CD14-positive monocyte (primary cell): ENCODE measurements at regions of chr14 and their contacts with region 1.

Region 1: DNA sequence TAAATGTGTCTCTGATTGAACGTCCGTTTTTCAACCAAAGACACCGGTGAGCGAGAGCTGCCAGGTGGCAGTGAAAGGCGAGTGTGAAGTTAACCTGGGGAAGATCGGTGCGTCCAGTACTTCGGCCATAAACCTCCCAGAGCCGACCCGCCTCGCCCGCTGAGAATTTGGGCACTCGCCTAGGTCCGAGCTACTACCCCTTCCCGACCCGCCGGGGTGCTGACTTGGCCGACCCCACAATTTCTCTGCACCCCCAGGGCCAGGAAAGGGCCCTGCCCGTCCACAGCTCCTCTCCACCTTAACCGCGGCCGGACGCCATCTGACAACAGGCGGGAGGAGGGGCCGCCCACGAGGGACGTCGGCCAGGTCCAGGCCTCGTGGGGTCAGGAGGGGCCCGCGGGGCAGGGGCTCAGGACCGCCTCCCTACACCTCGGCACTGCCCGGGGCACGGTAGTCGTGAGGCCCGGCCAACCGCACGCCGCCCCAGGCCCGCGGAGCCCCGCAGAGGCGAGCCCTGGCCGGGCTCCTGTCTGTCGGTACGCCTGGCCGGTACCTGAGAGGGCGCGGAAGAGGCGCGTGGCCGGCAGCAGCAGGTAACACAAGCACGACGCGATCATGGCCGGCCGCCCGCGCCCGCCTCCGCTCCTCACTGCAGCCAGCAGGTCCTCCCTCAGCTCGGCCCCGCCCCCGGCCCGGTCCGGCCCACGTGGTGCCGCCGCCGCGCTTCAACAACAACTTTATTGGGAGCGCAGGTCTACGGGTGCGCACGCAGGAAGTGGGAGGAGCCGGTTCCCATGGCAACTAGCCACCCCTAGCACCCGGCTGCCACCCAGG is at the start of gene ANGEL1:
- DNase-seq: peak; percentile 96 to 97 (median 96)
- H3K4me3 ChIP-seq: peak within 1 kb of the TSS; percentile 63 to 85 (median 81)
- H3K4me3 Mint-ChIP-seq: peak within 1 kb of the TSS; percentile 90 to 96
- H3K27ac ChIP-seq: peak within 1 kb of the TSS in 1 of 2 donors; percentile 80
- H3K27ac Mint-ChIP-seq: peak within 1 kb of the TSS; percentile 47 to 91 (median 85)
- H3K4me1 ChIP-seq: peaks cover 25 to 28% of the 10 kb centered on the region in 2 donors
- H3K4me1 Mint-ChIP-seq: peaks cover 21% of the 10 kb centered on the region
- H3K27me3 ChIP-seq: no peaks in the 10 kb centered on the region
- H3K27me3 Mint-ChIP-seq: peaks cover 0 to 3% (median 3%) of the 10 kb centered on the region in 3 donors
- CTCF ChIP-seq: no peak
- polyA plus RNA-seq, gene ANGEL1: 8.1 to 10.4 (median 8.5) TPM

Region 2: GRCh38 chr14:76117789-76118484 is 694.5 kb before region 1 on chr14:
- intact Hi-C with region 1: no loop called
- DNase-seq: no peak
- H3K4me3 ChIP-seq: no peak overlapping the region
- H3K4me3 Mint-ChIP-seq: no peak overlapping the region
- H3K27ac ChIP-seq: no peak overlapping the region
- H3K27ac Mint-ChIP-seq: no peak overlapping the region
- H3K4me1 ChIP-seq: no peaks in the 10 kb centered on the region
- H3K4me1 Mint-ChIP-seq: no peaks in the 10 kb centered on the region
- H3K27me3 ChIP-seq: no peaks in the 10 kb centered on the region
- H3K27me3 Mint-ChIP-seq: peaks cover 8 to 9% (median 9%) of the 10 kb centered on the region in 3 donors
- CTCF ChIP-seq: no peak

Region 3: DNA sequence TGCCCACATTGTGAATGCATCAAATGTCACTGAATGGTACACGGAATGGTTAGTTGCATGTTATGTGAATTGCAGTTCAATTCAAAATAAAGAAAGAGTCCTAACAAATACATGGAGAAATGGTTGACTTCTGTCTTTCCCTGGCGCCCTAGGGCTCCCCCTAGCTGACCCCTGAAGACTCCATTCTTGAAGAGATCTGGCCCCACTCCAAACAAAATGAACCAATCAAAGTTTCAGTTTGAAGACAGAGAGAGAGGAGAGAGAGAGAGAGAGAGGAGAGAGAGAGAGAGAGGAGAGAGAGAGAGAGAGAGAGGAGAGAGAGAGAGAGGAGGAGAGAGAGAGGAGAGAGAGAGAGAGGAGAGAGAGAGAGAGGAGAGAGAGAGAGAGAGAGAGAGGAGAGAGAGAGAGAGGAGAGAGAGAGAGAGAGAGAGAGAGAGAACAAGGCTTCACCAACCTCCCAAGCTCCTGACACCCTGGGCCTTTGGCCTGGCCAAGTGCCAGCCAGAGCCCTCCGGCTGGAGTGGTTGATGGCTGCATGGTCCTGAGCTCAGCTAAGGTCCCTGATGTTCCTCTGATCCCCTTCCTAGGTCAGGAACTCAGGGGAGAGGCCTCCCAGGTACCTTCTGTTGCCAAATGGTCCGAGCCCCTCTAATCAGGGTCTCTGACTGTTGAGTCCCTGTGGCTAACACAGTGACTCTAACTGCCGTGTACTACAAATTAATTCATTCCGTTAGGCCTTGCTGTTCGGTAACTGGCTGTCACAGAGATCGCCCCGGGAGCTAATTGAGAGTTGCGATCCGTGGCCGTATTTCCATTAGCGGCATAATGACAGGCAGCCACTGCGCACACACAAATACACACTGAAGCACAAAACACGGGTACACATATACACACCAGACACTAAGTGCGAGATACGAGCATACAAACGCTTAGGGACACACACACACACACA is 247.7 kb before region 1 on chr14:
- intact Hi-C with region 1: no loop called
- DNase-seq: no peak
- H3K4me3 ChIP-seq: no peak overlapping the region
- H3K4me3 Mint-ChIP-seq: no peak overlapping the region
- H3K27ac ChIP-seq: no peak overlapping the region
- H3K27ac Mint-ChIP-seq: no peak overlapping the region
- H3K4me1 ChIP-seq: no peaks in the 10 kb centered on the region
- H3K4me1 Mint-ChIP-seq: no peaks in the 10 kb centered on the region
- H3K27me3 ChIP-seq: no peaks in the 10 kb centered on the region
- H3K27me3 Mint-ChIP-seq: peaks cover 6 to 9% (median 7%) of the 10 kb centered on the region in 3 donors
- CTCF ChIP-seq: no peak

Region 4: GRCh38 chr14:76742966-76743365 is 69.5 kb before region 1 on chr14:
- intact Hi-C with region 1: no loop called
- DNase-seq: peak; percentile 67 to 78 (median 75)
- H3K4me3 ChIP-seq: peak overlapping the region in 1 of 3 experiments; percentile 13
- H3K4me3 Mint-ChIP-seq: peak overlapping the region in 1 of 2 donors; percentile 54
- H3K27ac ChIP-seq: peak overlapping the region in 1 of 2 donors; percentile 3
- H3K27ac Mint-ChIP-seq: peak overlapping the region; percentile 16 to 86 (median 69)
- H3K4me1 ChIP-seq: peaks cover 9 to 11% of the 10 kb centered on the region in 2 donors
- H3K4me1 Mint-ChIP-seq: peaks cover 6% of the 10 kb centered on the region
- H3K27me3 ChIP-seq: no peaks in the 10 kb centered on the region
- H3K27me3 Mint-ChIP-seq: peaks cover 0 to 4% (median 4%) of the 10 kb centered on the region in 3 donors
- CTCF ChIP-seq: no peak

Region 5: GRCh38 chr14:76773188-76773885 is 39.1 kb before region 1 on chr14:
- intact Hi-C with region 1: no loop called
- DNase-seq: peak; percentile 91 to 97 (median 93)
- H3K4me3 ChIP-seq: peak overlapping the region in 1 of 3 experiments; percentile 57
- H3K4me3 Mint-ChIP-seq: peak overlapping the region; percentile 50 to 78
- H3K27ac ChIP-seq: peak overlapping the region; percentile 73 to 95
- H3K27ac Mint-ChIP-seq: peak overlapping the region; percentile 94 to 97 (median 96)
- H3K4me1 ChIP-seq: peaks cover 62 to 77% of the 10 kb centered on the region in 2 donors
- H3K4me1 Mint-ChIP-seq: peaks cover 77% of the 10 kb centered on the region
- H3K27me3 ChIP-seq: no peaks in the 10 kb centered on the region
- H3K27me3 Mint-ChIP-seq: peaks cover 0 to 1% (median 0%) of the 10 kb centered on the region in 3 donors
- CTCF ChIP-seq: no peak

Region 6: GRCh38 chr14:76863724-76864407 is 51.4 kb after region 1 on chr14:
- intact Hi-C with region 1: loop called in 1 of 2 experiments (anchors 10 kb)
- DNase-seq: peak; percentile 84 to 92 (median 90)
- H3K4me3 ChIP-seq: peak overlapping the region; percentile 9 to 76 (median 49)
- H3K4me3 Mint-ChIP-seq: peak overlapping the region; percentile 75 to 96
- H3K27ac ChIP-seq: peak overlapping the region; percentile 94 to 98
- H3K27ac Mint-ChIP-seq: peak overlapping the region; percentile 92 to 98 (median 95)
- H3K4me1 ChIP-seq: peaks cover 61 to 73% of the 10 kb centered on the region in 2 donors
- H3K4me1 Mint-ChIP-seq: peaks cover 72% of the 10 kb centered on the region
- H3K27me3 ChIP-seq: no peaks in the 10 kb centered on the region
- H3K27me3 Mint-ChIP-seq: peaks cover 0 to 3% (median 0%) of the 10 kb centered on the region in 3 donors
- CTCF ChIP-seq: no peak